Calu3 (cell line): ENCODE measurements at regions of chr6 and their contacts with region 1.

Region 1: DNA sequence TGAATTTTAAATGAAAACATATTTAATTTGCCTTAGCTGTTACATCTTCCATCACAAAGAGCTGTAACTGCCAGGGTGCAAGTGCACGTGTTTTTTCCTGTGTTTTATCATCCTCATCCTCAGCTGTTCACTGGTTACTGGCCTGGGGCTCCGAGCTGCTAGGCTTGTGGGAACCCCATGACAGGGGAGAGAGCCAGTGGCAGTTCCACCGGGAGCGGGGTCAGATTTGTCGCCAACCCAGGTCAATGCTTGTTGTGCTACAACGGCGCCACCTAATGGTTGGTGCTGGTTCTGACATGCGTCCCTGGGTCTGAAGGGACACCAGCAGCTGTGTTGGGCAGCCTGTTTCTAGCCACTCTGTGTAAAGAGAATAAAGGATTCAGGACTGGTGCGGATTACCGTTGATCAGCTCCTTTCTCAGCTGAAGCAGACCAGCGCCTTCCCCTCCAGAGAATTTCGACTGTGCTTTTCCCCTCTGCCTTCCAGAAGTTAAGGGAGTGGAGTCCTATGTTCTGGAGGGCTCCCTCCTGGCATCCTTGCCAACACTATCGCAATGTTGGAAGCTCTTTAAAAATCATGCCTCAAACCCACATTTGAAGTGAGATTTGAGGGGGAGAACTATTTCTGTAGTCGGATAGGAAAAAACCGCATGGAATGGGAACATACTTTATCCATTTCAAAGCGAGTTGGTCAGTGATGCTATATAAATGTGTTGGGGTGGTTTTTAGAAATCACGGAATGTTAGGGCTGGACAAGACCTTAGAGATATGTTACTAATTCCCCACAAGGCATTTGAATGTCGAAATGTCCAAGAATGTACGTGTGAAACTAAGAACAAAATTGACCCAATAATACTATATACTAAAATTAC is 32.1 kb downstream of the SUMO4 start:
- DNase-seq: peak; percentile 85
- H3K4me3 Mint-ChIP-seq: no peak overlapping the region
- H3K27ac Mint-ChIP-seq: no peak overlapping the region
- H3K4me1 Mint-ChIP-seq: no peaks in the 10 kb centered on the region
- H3K27me3 Mint-ChIP-seq: no peaks in the 10 kb centered on the region
- CTCF ChIP-seq: peak; percentile 71

Region 2: GRCh38 chr6:149028767-149029405 is 403.3 kb before region 1 on chr6:
- CTCF ChIA-PET with region 1: interaction called, 10 read pairs
- intact Hi-C with region 1: loop called (anchors 2 kb)
- DNase-seq: peak; percentile 61
- H3K4me3 Mint-ChIP-seq: no peak overlapping the region
- H3K27ac Mint-ChIP-seq: no peak overlapping the region
- H3K4me1 Mint-ChIP-seq: peaks cover 22% of the 10 kb centered on the region
- H3K27me3 Mint-ChIP-seq: no peaks in the 10 kb centered on the region
- CTCF ChIP-seq: no peak

Region 3: DNA sequence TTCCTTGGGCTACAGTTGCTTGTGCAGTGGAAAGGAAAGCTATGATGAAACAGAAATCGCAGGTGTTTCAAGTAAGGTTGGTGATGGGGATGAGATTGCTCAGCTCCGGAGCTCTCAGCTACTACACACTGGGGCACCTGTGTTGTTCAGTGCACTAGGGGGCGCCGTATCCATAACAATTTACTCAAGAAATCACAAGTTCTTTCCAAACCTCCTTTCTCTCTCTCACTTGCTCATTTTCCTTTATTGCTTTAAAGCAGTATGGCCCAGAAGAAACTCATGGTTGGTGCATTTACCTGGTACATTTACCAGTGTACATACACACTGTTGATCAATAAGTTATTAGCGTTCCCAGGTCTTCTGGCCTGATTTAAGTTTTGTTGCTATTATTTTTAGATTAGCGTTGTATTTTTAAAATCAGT is 349.8 kb before region 1 on chr6:
- CTCF ChIA-PET with region 1: interaction called, 15 read pairs
- intact Hi-C with region 1: loop called (anchors 1 kb)
- DNase-seq: peak; percentile 71
- H3K4me3 Mint-ChIP-seq: no peak overlapping the region
- H3K27ac Mint-ChIP-seq: no peak overlapping the region
- H3K4me1 Mint-ChIP-seq: no peaks in the 10 kb centered on the region
- H3K27me3 Mint-ChIP-seq: no peaks in the 10 kb centered on the region
- CTCF ChIP-seq: peak; percentile 64

Region 4: GRCh38 chr6:149190224-149190831 is 241.8 kb before region 1 on chr6:
- CTCF ChIA-PET with region 1: no interaction called
- intact Hi-C with region 1: loop called (anchors 10 kb)
- DNase-seq: peak; percentile 36
- H3K4me3 Mint-ChIP-seq: no peak overlapping the region
- H3K27ac Mint-ChIP-seq: no peak overlapping the region
- H3K4me1 Mint-ChIP-seq: no peaks in the 10 kb centered on the region
- H3K27me3 Mint-ChIP-seq: no peaks in the 10 kb centered on the region
- CTCF ChIP-seq: no peak

Region 5: DNA sequence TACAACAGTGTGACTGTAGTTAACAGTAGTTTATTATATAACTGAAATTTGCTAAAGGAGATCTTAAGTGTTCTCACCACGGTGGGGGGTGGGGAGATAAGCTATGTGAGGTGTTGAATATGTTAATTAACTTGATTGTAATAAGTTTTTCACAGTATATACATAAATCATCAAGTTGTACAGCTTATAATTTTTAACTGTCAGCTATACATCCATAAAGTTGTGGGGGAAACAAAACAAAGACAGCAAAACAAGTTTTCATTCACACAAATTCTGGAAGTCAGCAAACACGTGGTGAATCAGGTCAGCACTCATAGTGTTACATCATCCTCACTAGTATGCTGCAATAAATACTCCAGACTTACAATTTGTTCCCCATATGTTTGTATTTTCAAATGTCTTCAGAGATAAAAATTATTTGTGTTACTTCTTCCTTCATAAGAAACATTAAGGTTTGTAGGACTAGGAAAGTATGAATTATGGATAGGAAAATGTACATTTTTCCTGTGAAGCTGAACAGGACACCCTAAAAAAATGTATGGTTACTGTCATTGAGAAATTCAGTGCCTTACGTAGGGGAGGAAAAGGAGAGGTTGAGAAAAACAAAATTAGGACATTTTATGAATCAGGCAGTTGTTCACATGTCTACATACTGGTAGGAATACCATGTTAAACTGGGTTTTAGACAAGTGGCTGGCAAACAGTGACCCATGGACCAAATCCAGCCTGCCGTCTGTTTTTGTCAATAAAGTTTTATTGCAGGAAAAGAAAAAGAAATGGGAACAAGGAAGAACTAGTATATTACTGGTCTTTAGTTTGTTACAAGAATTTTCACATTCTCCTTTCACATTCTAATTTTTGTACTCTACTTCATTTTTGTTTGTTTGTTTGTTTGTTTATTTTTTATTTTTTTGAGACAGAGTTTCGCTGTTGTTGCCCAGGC is 26.0 kb before region 1 on chr6:
- CTCF ChIA-PET with region 1: no interaction called
- intact Hi-C with region 1: loop called (anchors 2 kb)
- DNase-seq: no peak
- H3K4me3 Mint-ChIP-seq: no peak overlapping the region
- H3K27ac Mint-ChIP-seq: no peak overlapping the region
- H3K4me1 Mint-ChIP-seq: no peaks in the 10 kb centered on the region
- H3K27me3 Mint-ChIP-seq: no peaks in the 10 kb centered on the region
- CTCF ChIP-seq: no peak

Region 6: GRCh38 chr6:149513915-149514314 is 81.8 kb after region 1 on chr6:
- CTCF ChIA-PET with region 1: no interaction called
- intact Hi-C with region 1: loop called (anchors 5 kb)
- DNase-seq: no peak
- H3K4me3 Mint-ChIP-seq: no peak overlapping the region
- H3K27ac Mint-ChIP-seq: no peak overlapping the region
- H3K4me1 Mint-ChIP-seq: no peaks in the 10 kb centered on the region
- H3K27me3 Mint-ChIP-seq: no peaks in the 10 kb centered on the region
- CTCF ChIP-seq: no peak